Activated CD4-positive, alpha-beta T cell treated with anti-CD3 and anti-CD28 coated beads for 36 hours (primary cell): ENCODE measurements at regions of chr7 and their contacts with region 1.

Region 1: GRCh38 chr7:70719125-70719524 is 412.8 kb upstream of the GALNT17 start:
- DNase-seq: no peak
- ATAC-seq: no peak
- H3K4me3 Mint-ChIP-seq: no peak overlapping the region
- H3K27ac Mint-ChIP-seq: no peak overlapping the region
- H3K4me1 Mint-ChIP-seq: peaks cover 16% of the 10 kb centered on the region
- H3K27me3 Mint-ChIP-seq: no peaks in the 10 kb centered on the region

Region 2: GRCh38 chr7:70788276-70788675 is 69.2 kb after region 1 on chr7:
- CTCF ChIA-PET with region 1: interaction called, 3 read pairs
- POLR2A ChIA-PET with region 1: interaction called, 3 read pairs
- intact Hi-C with region 1: loop called in 1 of 2 experiments (anchors 5 kb)
- DNase-seq: peak; percentile 65
- ATAC-seq: peak; percentile 90
- H3K4me3 Mint-ChIP-seq: no peak overlapping the region
- H3K27ac Mint-ChIP-seq: no peak overlapping the region
- H3K4me1 Mint-ChIP-seq: peaks cover 13% of the 10 kb centered on the region
- H3K27me3 Mint-ChIP-seq: no peaks in the 10 kb centered on the region